Calu3 (cell line): ENCODE measurements at regions of chr19 and their contacts with region 1.

Region 1: DNA sequence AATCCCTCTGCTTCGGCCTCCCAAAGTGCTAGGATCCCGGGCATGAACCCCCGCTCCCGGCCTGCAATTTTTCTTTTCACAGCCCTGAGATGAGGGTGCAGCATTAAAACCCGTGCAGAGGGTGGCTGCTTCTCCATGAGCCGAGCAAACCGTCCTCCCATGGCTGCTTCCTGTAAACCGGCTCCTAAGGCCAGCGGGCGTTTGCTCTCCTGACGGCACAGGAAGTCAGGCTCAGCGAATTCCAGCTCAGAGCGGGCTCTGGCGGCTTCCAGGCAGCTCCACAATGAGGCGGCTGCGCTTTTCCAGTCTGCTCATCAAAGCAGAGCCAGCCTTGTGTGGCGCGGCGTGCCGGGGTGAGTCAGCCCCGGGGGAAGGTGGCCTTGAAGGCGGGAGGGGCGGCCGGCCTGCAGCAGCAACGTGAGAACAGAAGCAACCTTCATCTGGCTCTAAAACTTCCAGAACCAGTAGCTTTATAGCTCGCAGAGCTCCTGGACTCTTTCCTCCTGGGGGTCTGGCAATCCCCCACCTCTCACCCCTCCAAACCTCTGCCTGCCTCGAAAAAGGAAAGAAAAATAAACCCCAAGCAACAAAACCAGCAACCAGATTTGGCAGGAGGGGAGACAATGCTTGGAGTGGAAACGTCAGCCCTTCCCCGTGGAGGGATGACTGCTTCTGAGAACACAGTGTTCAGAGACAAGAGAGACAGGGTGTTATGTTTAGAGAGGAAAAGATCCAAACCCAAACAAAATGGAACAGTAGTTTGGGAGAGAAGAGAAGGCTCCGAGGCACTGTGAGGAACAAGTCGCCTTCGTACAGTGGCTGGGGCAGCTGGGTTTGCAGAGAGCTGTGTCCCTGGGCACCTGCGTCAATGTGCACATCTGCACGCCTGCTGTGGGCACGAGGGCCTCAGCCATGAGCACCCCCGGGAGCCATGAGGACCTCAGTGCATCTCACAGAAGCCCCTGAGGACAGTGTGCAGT is 67.8 kb downstream of the GADD45B start:
- DNase-seq: peak; percentile 88
- H3K4me3 Mint-ChIP-seq: peak overlapping the region; percentile 16
- H3K27ac Mint-ChIP-seq: peak overlapping the region; percentile 80
- H3K4me1 Mint-ChIP-seq: peaks cover 37% of the 10 kb centered on the region
- H3K27me3 Mint-ChIP-seq: no peaks in the 10 kb centered on the region
- CTCF ChIP-seq: no peak

Region 2: DNA sequence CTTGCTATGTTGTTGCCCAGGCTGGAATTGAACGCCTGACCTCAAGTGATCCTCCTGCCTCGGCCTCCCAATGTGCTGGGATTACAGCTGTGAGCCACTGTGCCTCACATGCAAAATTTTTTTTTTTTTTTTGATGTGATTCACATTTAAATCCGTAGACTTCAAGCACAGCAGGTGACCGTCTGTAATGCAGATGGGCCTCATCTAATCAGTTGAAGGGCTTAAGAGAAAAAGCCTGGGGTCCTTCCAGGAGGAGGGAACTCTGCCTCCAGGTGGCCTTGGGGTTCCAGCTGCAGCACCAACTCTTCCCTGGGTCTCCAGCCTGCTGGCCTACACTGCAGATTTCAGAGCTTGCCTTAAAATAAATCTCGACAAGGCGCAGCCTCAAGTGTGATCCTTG is 24.3 kb before region 1 on chr19:
- CTCF ChIA-PET with region 1: no interaction called
- intact Hi-C with region 1: no loop called
- DNase-seq: no peak
- H3K4me3 Mint-ChIP-seq: no peak overlapping the region
- H3K27ac Mint-ChIP-seq: no peak overlapping the region
- H3K4me1 Mint-ChIP-seq: peaks cover 3% of the 10 kb centered on the region
- H3K27me3 Mint-ChIP-seq: no peaks in the 10 kb centered on the region
- CTCF ChIP-seq: no peak

Region 3: GRCh38 chr19:2594319-2594718 is 50.6 kb after region 1 on chr19:
- CTCF ChIA-PET with region 1: no interaction called
- intact Hi-C with region 1: no loop called
- DNase-seq: no peak
- H3K4me3 Mint-ChIP-seq: no peak overlapping the region
- H3K27ac Mint-ChIP-seq: no peak overlapping the region
- H3K4me1 Mint-ChIP-seq: no peaks in the 10 kb centered on the region
- H3K27me3 Mint-ChIP-seq: no peaks in the 10 kb centered on the region
- CTCF ChIP-seq: no peak

Region 4: DNA sequence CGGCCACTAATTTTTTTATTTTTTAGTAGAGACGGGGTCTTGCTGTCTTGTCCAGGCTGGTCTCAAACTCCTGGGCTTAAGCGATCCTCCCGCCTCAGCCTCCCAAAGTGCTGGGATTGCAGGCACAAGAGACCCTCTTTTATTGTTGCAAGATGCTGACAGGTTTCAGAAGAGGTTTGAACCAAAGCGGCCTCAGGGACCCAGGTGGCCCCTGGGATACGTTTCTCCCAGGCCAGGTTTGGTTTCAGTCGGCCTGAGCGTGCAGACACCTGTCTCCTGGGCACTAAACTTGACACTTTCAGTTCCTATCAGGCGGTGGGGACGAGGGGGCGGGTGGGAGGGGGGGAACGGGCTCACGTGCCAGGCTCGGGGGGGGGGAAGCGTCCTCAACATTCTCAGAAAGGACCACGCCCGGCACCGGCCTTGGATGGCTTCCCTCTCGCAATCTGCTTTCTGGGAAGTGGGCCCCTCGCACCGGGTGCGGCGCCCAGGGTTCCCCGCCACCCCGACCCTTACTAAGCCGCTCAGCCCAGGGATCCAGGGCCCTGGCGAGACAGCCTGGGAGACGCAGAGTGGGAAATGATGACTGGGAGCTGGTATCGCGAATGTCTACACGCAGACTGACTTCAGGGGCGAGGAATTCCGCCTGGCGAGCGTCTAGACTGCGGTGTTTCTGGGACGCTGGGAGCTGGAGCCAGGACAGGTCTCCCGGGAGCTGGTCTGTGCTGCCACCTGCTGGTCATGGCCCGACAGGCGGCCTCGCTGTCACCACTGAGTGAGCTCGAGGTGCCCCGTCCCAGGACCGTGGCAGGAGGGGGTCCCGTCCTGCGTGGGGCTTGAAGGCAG is 67.1 kb after region 1 on chr19:
- CTCF ChIA-PET with region 1: interaction called, 7 read pairs
- intact Hi-C with region 1: loop called (anchors 5 kb)
- DNase-seq: peak; percentile 93
- H3K4me3 Mint-ChIP-seq: peak overlapping the region; percentile 62
- H3K27ac Mint-ChIP-seq: no peak overlapping the region
- H3K4me1 Mint-ChIP-seq: no peaks in the 10 kb centered on the region
- H3K27me3 Mint-ChIP-seq: no peaks in the 10 kb centered on the region
- CTCF ChIP-seq: peak; percentile 83